ENCODE measurements at regions of chr3 and their contacts with region 1.

Region 1: DNA sequence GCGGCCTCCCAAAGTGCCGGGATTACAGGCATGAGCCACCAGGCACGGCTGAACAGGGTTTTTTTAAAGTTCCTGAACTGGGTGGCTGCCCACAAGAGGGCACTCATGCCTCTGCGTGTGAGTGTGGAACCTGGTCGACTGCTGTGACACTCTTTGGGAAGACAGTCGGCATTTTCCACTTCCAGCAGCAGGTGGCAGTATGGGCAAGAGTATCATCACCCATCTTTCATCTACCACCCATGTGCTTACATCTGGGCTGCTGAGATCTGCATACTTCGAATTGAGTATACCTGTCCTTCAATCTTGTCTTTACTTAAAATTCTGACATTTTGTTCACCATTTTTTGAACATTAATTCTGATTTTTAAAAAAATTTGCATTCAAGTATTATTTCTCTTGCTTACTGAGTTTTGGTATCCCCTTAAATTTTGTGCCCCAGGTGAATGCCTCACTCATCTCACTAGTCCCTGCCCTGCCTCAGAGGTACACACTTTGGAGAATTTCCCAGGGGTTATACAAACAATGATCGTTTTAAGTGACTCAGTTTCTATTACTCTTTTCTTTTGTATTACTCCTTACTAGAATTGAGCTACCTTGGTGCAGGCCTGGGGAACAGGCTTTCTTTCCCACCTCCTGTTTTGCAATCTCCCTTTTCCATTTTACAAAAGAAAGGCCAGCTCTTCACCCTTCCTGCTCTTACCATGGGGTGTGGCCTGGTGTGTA is 11.8 kb downstream of the CLEC3B start:
- DNase-seq: peak; percentile 69
- ATAC-seq: peak; percentile 99
- H3K4me3 Mint-ChIP-seq: no peak overlapping the region
- H3K27ac Mint-ChIP-seq: no peak overlapping the region
- H3K4me1 Mint-ChIP-seq: peaks cover 33% of the 10 kb centered on the region
- H3K27me3 Mint-ChIP-seq: peaks cover 14% of the 10 kb centered on the region
- CTCF ChIP-seq: peak; percentile 67

Region 2: DNA sequence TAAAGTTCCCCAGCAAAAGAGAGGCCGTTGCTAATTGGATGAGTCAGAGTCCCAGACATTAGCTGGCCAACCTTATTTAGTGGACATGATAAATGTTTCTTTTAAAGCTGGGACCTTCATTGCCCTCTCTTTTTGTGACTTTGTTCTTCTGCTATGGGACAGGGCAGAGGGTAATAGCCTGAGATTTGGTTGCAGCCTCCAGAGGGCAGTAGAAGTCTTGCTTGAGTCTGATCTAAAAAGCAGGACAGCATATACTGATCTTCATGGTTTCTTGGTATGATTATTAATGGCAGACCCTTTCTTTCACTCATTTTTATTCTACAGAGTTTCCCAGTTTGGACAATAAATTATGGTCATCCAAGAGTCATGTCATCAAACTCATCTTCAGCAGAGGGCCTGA is 508.0 kb before region 1 on chr3:
- CTCF ChIA-PET with region 1: interaction called, 3 read pairs
- POLR2A ChIA-PET with region 1: no interaction called
- intact Hi-C with region 1: loop called (anchors 1 kb)
- DNase-seq: no peak
- ATAC-seq: no peak
- H3K4me3 Mint-ChIP-seq: no peak overlapping the region
- H3K27ac Mint-ChIP-seq: no peak overlapping the region
- H3K4me1 Mint-ChIP-seq: no peaks in the 10 kb centered on the region
- H3K27me3 Mint-ChIP-seq: peaks cover 32% of the 10 kb centered on the region
- CTCF ChIP-seq: no peak

Region 3: DNA sequence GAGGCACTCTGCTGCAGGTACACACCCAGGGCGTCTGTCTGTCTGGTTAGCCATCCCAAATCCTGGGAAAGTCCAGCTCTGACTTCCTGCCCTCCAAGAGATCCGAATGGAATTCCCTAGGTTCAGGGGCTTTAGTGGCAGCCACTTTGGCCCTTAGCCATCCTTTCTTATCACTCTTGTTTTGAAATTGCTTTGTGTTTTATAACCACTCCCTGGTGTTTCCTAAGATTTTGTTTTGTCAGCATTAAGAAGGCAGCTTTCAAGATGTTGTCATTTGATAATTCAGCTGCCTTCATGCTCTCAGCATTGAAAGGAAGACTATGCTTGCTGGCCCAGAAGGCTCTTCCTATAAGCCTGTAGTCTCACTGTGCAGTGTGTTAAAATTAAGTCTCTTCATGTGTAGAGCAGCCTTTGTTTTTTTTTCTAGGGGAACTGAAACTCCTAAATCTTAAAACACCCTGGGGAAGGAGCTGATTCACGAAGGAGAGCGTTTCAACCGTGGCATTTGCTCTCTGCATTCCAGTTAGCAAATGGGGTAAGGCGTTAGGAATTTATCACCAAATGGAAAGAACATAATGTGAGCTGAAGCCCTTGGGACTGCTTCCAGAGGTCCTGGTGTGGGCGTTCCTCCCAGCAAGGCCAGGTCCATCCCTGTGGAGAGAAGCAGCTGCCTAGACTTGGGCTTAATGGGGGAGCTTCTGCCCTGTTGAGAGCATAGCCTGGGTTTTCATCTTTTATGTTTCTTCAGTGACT is 26.0 kb before region 1 on chr3:
- CTCF ChIA-PET with region 1: interaction called, 4 read pairs
- POLR2A ChIA-PET with region 1: interaction called, 10 read pairs
- intact Hi-C with region 1: no loop called
- DNase-seq: no peak
- ATAC-seq: peak; percentile 77
- H3K4me3 Mint-ChIP-seq: no peak overlapping the region
- H3K27ac Mint-ChIP-seq: no peak overlapping the region
- H3K4me1 Mint-ChIP-seq: peaks cover 20% of the 10 kb centered on the region
- H3K27me3 Mint-ChIP-seq: no peaks in the 10 kb centered on the region
- CTCF ChIP-seq: no peak

Region 4: GRCh38 chr3:45387636-45388348 is 349.9 kb after region 1 on chr3:
- CTCF ChIA-PET with region 1: no interaction called
- POLR2A ChIA-PET with region 1: no interaction called
- intact Hi-C with region 1: loop called (anchors 1 kb)
- DNase-seq: no peak
- ATAC-seq: peak; percentile 4
- H3K4me3 Mint-ChIP-seq: peak overlapping the region; percentile 98
- H3K27ac Mint-ChIP-seq: peak overlapping the region; percentile 90
- H3K4me1 Mint-ChIP-seq: peaks cover 17% of the 10 kb centered on the region
- H3K27me3 Mint-ChIP-seq: peaks cover 9% of the 10 kb centered on the region
- CTCF ChIP-seq: no peak

Region 5: GRCh38 chr3:45656575-45657363 is 618.9 kb after region 1 on chr3:
- CTCF ChIA-PET with region 1: interaction called, 5 read pairs
- POLR2A ChIA-PET with region 1: no interaction called
- intact Hi-C with region 1: loop called (anchors 1 kb)
- DNase-seq: peak; percentile 71
- ATAC-seq: peak; percentile 92
- H3K4me3 Mint-ChIP-seq: no peak overlapping the region
- H3K27ac Mint-ChIP-seq: peak overlapping the region; percentile 78
- H3K4me1 Mint-ChIP-seq: peaks cover 49% of the 10 kb centered on the region
- H3K27me3 Mint-ChIP-seq: no peaks in the 10 kb centered on the region
- CTCF ChIP-seq: no peak

Region 6: DNA sequence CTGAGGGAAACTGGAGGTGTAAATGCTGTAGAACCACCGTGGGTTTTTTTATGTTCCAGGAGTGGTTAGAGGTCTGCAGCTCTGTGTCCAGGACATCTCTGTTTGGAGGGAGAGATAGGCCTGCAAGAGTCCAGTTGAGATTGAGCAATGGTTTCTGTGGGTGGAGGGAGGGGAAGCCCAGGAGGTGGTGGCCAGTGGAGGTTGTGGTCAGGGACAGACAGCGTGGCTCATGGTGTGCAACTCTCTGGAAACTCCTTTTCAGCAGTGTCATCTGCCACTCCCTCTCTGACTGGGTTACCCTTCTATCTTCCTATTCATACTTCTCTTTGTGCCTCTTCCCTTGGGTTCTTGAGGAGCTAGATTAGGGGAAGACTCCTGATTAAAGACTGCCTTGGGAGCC is 979.8 kb after region 1 on chr3:
- CTCF ChIA-PET with region 1: no interaction called
- POLR2A ChIA-PET with region 1: no interaction called
- intact Hi-C with region 1: no loop called
- DNase-seq: no peak
- ATAC-seq: no peak
- H3K4me3 Mint-ChIP-seq: no peak overlapping the region
- H3K27ac Mint-ChIP-seq: no peak overlapping the region
- H3K4me1 Mint-ChIP-seq: no peaks in the 10 kb centered on the region
- H3K27me3 Mint-ChIP-seq: peaks cover 3% of the 10 kb centered on the region
- CTCF ChIP-seq: no peak

Region 7: GRCh38 chr3:46078712-46079400 is 1041.0 kb after region 1 on chr3:
- CTCF ChIA-PET with region 1: interaction called, 3 read pairs
- POLR2A ChIA-PET with region 1: no interaction called
- intact Hi-C with region 1: loop called (anchors 2 kb)
- DNase-seq: peak; percentile 48
- ATAC-seq: peak; percentile 99
- H3K4me3 Mint-ChIP-seq: peak overlapping the region; percentile 3
- H3K27ac Mint-ChIP-seq: no peak overlapping the region
- H3K4me1 Mint-ChIP-seq: peaks cover 3% of the 10 kb centered on the region
- H3K27me3 Mint-ChIP-seq: no peaks in the 10 kb centered on the region
- CTCF ChIP-seq: peak; percentile 77

Measured in activated B cell treated with CpG ODN at 0.5 μM for 24 hours (primary cell).